T-cell (primary cell): ENCODE measurements at regions of chr12 and their contacts with region 1.

Region 1: GRCh38 chr12:103493199-103493598 is 2.6 kb downstream of the C12orf42 start:
- DNase-seq: no peak
- ATAC-seq: no peak
- H3K4me3 ChIP-seq: no peak overlapping the region
- H3K4me3 Mint-ChIP-seq: no peak overlapping the region
- H3K27ac ChIP-seq: no peak overlapping the region
- H3K27ac Mint-ChIP-seq: no peak overlapping the region
- H3K4me1 ChIP-seq: peaks cover 10 to 14% of the 10 kb centered on the region in 2 experiments
- H3K4me1 Mint-ChIP-seq: peaks cover 13 to 20% (median 16%) of the 10 kb centered on the region in 3 donors
- H3K27me3 ChIP-seq: peaks cover 0 to 10% of the 10 kb centered on the region in 2 experiments
- H3K27me3 Mint-ChIP-seq: peaks cover 3 to 38% of the 10 kb centered on the region in 2 donors

Region 2: GRCh38 chr12:103085541-103085940 is 407.7 kb before region 1 on chr12:
- CTCF ChIA-PET with region 1: interaction called in 1 of 2 experiments, 12 read pairs
- POLR2A ChIA-PET with region 1: no interaction called
- DNase-seq: no peak
- ATAC-seq: no peak
- H3K4me3 ChIP-seq: no peak overlapping the region
- H3K4me3 Mint-ChIP-seq: no peak overlapping the region
- H3K27ac ChIP-seq: no peak overlapping the region
- H3K27ac Mint-ChIP-seq: no peak overlapping the region
- H3K4me1 ChIP-seq: no peaks in the 10 kb centered on the region
- H3K4me1 Mint-ChIP-seq: no peaks in the 10 kb centered on the region
- H3K27me3 ChIP-seq: no peaks in the 10 kb centered on the region
- H3K27me3 Mint-ChIP-seq: no peaks in the 10 kb centered on the region

Region 3: DNA sequence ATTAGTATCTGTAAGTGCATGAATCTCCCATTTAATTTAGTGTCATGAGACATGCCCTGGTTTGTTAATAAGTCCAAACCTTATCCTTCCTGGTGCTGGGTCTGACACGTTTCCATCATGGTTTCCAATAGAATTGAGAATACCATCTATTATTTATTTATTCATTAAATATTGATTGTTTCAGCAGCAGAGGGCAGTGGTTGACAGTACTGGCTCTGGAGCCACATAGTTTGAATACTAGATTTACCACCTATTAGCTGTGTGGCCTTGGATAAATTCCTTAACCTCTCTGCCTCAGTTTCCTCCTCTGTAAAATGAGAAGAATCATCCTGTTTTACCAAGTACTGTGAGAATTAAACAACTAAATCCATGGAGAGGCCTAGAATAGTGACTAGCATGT is 92.9 kb after region 1 on chr12:
- CTCF ChIA-PET with region 1: no interaction called
- POLR2A ChIA-PET with region 1: no interaction called
- DNase-seq: no peak
- ATAC-seq: no peak
- H3K4me3 ChIP-seq: no peak overlapping the region
- H3K4me3 Mint-ChIP-seq: no peak overlapping the region
- H3K27ac ChIP-seq: no peak overlapping the region
- H3K27ac Mint-ChIP-seq: no peak overlapping the region
- H3K4me1 ChIP-seq: no peaks in the 10 kb centered on the region
- H3K4me1 Mint-ChIP-seq: no peaks in the 10 kb centered on the region
- H3K27me3 ChIP-seq: no peaks in the 10 kb centered on the region
- H3K27me3 Mint-ChIP-seq: peaks cover 9 to 25% of the 10 kb centered on the region in 2 donors